MCF 10A (cell line): ENCODE measurements at regions of chr7 and their contacts with region 1.

Region 1: DNA sequence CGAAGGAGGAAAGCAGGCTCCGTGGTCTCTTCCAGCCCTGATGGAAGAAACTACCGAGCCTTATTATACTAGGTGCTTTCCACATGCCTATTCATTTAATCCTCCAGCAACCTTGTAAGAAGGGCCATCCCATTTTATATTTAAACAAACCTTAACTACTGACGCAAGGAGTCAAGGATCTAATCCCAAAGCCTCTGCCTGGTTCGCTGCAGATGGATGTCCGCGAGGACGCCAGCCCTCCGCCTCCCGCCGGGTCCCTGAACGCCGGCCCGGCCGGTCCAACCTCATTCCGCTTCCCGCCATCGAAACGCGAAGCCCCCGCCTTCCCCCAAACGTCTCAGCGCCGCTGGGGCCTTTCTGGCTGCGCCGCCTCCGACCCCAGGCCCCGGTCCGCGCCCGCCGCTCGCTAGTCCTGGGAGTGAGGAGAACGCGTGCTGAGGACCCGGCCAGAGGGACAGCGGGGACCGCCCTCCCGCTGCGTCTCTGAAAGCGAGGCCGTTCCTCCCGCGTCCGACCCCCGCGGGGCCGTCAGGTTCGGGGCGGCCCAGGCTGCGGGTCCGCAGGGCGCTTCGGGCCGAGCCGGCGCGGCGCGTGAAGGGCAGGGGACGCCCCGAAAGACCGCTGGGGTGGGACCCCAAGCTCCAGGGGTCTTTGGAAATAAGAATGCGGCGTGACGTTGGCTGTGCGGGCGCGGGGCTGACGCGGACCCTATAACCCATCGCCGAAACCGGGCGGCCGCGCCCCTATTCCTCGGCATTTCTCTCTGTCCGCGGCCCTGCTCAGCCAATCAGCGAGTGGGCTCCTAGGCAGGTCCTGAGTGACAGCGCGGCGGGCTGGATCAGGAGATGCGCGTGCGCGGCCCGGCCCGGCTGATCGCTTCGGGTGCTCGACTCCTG is at the start of gene ATP6V0E2:
- DNase-seq: peak; percentile 92
- H3K4me3 Mint-ChIP-seq: peak within 1 kb of the TSS; percentile 79
- H3K27ac Mint-ChIP-seq: peak within 1 kb of the TSS; percentile 22
- H3K4me1 Mint-ChIP-seq: peaks cover 6% of the 10 kb centered on the region
- H3K27me3 Mint-ChIP-seq: no peaks in the 10 kb centered on the region
- CTCF ChIP-seq: no peak
- total RNA-seq, gene ATP6V0E2: 8.6 and 8.9 TPM in 2 replicates

Region 2: GRCh38 chr7:149838224-149838947 is 34.9 kb before region 1 on chr7 and contains the start of gene ZNF862:
- CTCF ChIA-PET with region 1: no interaction called
- POLR2A ChIA-PET with region 1: interaction called, 9 read pairs
- intact Hi-C with region 1: loop called (anchors 2 kb)
- DNase-seq: peak; percentile 96
- H3K4me3 Mint-ChIP-seq: peak within 1 kb of the TSS; percentile 77
- H3K27ac Mint-ChIP-seq: peak within 1 kb of the TSS; percentile 52
- H3K4me1 Mint-ChIP-seq: peaks cover 10% of the 10 kb centered on the region
- H3K27me3 Mint-ChIP-seq: peaks cover 19% of the 10 kb centered on the region
- CTCF ChIP-seq: no peak
- total RNA-seq, gene ZNF862: 17.4 and 22.2 TPM in 2 replicates

Region 3: GRCh38 chr7:149883452-149883861 is 10.1 kb after region 1 on chr7:
- CTCF ChIA-PET with region 1: interaction called, 10 read pairs
- POLR2A ChIA-PET with region 1: no interaction called
- intact Hi-C with region 1: no loop called
- DNase-seq: peak; percentile 57
- H3K4me3 Mint-ChIP-seq: no peak overlapping the region
- H3K27ac Mint-ChIP-seq: no peak overlapping the region
- H3K4me1 Mint-ChIP-seq: no peaks in the 10 kb centered on the region
- H3K27me3 Mint-ChIP-seq: no peaks in the 10 kb centered on the region
- CTCF ChIP-seq: peak; percentile 52

Region 4: DNA sequence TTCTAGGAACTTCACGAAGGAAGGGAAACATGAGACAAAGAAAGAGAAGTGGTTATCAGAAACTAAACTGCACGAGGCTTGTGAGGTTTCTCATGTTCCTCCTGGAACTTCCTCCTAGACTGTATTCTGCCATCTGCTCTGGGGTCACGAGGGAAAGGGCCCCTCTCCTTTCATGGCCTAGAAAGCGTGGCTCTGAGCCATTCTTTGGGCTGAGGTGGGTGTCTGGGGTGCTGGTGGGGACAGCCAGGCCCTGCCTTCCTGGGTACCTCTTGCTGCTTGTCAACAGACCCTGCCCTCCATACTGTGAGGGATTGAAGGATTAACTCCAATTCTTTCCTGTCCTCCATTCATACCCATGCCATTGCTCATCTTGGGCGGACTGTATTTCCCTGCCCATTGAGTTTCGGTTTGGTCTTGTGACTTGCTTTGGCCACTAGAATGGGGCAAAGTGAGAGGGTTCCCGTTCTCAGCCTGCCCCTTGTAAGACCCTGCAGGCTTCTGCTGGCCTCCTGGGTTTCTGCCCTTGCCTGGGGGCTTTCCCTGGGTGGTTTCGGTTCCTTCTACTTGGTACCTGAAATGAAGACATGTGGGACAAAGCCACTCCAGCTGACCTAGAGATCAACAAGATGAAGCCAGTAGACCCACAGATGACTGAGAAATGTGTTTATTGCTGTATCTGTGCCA is 562.2 kb after region 1 on chr7:
- CTCF ChIA-PET with region 1: no interaction called
- POLR2A ChIA-PET with region 1: no interaction called
- intact Hi-C with region 1: no loop called
- DNase-seq: no peak
- H3K4me3 Mint-ChIP-seq: no peak overlapping the region
- H3K27ac Mint-ChIP-seq: no peak overlapping the region
- H3K4me1 Mint-ChIP-seq: no peaks in the 10 kb centered on the region
- H3K27me3 Mint-ChIP-seq: peaks cover 12% of the 10 kb centered on the region
- CTCF ChIP-seq: no peak